ENCODE measurements at regions of chr12 and their contacts with region 1.

Region 1: GRCh38 chr12:89352492-89353187 is at the start of gene DUSP6:
- DNase-seq: peak; percentile 99
- ATAC-seq: peak; percentile 75
- H3K4me3 ChIP-seq: peak within 1 kb of the TSS; percentile 90 to 94
- H3K27ac ChIP-seq: peak within 1 kb of the TSS; percentile 99
- H3K4me1 ChIP-seq: peaks cover 44 to 57% of the 10 kb centered on the region in 2 experiments
- H3K27me3 ChIP-seq: no peaks in the 10 kb centered on the region
- CTCF ChIP-seq: no peak
- POLR2A ChIP-seq: no peak
- RAD21 ChIP-seq: no peak
- total RNA-seq, gene DUSP6: 219 TPM

Region 2: DNA sequence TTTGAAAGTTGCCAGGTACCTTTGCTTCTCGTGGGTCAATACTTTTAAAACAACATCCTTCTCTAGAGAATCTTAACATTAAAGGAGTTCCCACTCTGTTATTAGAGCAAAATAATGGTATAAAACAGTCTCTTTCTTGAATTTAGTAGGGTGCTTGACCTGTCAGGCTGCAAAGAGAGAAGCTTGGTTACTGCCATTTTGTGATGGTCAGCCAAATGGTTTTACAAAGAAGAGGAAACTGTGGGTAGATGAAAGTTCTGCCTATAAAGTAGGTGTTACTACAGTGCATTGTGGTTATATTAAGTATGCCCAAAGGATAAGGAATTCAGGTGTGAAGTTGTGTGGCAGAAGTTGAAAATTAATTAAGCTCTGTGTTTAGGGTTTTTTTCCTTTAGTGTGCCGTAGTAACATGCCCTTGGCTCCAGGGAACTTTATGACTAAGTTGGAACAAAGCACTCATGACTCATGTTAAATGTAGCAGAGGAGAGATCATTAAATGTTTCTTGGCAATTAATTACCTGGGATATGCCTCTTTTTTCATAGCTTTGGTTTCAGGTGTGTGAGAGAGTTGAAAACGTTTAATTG is 418.4 kb before region 1 on chr12:
- CTCF ChIA-PET with region 1: no interaction called
- POLR2A ChIA-PET with region 1: interaction called, 3 read pairs
- RAD21 ChIA-PET with region 1: no interaction called
- intact Hi-C with region 1: loop called (anchors 5 kb)
- DNase-seq: peak; percentile 98
- ATAC-seq: peak; percentile 73
- H3K4me3 ChIP-seq: no peak overlapping the region
- H3K27ac ChIP-seq: peak overlapping the region; percentile 98
- H3K4me1 ChIP-seq: peaks cover 78 to 90% of the 10 kb centered on the region in 2 experiments
- H3K27me3 ChIP-seq: no peaks in the 10 kb centered on the region
- CTCF ChIP-seq: no peak
- POLR2A ChIP-seq: no peak
- RAD21 ChIP-seq: peak; percentile 52

Region 3: GRCh38 chr12:89051065-89051677 is 301.5 kb before region 1 on chr12:
- CTCF ChIA-PET with region 1: no interaction called
- POLR2A ChIA-PET with region 1: interaction called, 3 read pairs
- RAD21 ChIA-PET with region 1: no interaction called
- intact Hi-C with region 1: loop called (anchors 1 kb)
- DNase-seq: peak; percentile 70
- ATAC-seq: peak; percentile 85
- H3K4me3 ChIP-seq: no peak overlapping the region
- H3K27ac ChIP-seq: no peak overlapping the region
- H3K4me1 ChIP-seq: no peaks in the 10 kb centered on the region
- H3K27me3 ChIP-seq: no peaks in the 10 kb centered on the region
- CTCF ChIP-seq: peak; percentile 86 to 95 (median 92)
- POLR2A ChIP-seq: no peak
- RAD21 ChIP-seq: peak; percentile 97

Region 4: DNA sequence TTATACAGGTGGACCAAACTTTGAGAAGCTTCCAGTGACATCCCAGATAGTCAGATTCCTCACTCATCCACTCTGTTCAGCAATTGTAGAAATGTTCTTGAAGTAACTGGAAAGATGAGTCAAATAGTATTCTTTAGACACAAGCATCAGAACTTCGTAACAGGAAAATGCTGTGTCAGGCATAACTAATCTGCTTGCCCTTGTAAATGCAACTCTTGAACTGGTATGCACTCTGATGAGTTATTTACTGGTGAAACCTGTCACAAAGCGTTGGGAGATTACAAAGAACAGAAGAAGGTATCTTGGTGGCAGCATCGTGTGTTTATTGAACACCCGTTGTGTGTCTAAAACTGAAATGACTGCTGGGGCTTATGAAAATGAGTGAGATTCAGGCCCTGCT is 10.4 kb after region 1 on chr12:
- CTCF ChIA-PET with region 1: interaction called, 4 read pairs
- POLR2A ChIA-PET with region 1: interaction called, 17 read pairs
- RAD21 ChIA-PET with region 1: no interaction called
- intact Hi-C with region 1: no loop called
- DNase-seq: no peak
- ATAC-seq: no peak
- H3K4me3 ChIP-seq: no peak overlapping the region
- H3K27ac ChIP-seq: no peak overlapping the region
- H3K4me1 ChIP-seq: no peaks in the 10 kb centered on the region; a peak in 1 of 4 replicates
- H3K27me3 ChIP-seq: no peaks in the 10 kb centered on the region
- CTCF ChIP-seq: no peak
- POLR2A ChIP-seq: no peak
- RAD21 ChIP-seq: no peak

Region 5: DNA sequence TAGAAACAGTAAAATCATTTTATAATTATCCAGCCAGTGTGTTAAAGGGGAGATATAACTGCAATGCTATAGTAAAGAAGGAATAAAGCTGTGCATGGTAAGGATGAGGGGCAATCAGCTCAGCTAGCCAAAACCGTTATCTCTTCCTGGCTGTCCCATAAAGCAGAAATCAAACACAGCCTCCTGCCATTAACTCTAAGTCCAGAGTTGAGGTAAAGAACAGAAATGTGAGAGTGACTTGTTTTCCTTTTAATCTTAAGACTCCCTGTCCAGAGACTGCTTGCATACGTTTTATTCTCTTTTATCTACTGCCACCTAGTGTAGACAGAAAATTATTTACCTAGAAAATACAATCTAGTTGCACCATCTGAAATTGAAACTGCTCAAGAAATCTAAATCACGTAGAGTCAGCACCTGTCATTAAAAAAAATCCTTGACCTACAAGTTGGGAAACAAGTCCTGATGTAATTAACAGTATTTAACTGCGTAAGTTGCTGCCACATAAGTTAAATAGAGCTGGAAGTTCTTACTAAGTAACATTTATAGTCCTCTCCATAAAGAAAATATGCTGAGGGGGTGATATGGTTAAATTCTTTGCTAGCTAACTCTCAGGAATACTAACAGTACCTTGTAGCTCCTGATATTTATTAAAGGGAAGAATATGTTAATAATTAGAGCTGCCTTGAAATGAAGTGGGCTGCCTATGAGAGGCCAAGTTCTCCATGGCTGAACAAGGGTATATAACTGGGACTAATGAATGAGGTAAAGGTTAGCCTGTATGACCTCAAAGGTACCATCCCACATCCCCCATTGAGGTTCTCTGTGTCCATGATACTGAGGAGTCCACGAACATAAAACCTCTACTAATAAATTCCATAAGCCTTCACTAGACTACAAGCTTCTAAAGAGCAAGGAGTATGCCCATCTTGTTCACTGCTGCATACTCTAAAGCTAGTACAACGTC is 109.3 kb after region 1 on chr12:
- CTCF ChIA-PET with region 1: interaction called, 4 read pairs
- POLR2A ChIA-PET with region 1: interaction called, 12 read pairs
- RAD21 ChIA-PET with region 1: interaction called in 1 of 2 experiments, 3 read pairs
- intact Hi-C with region 1: loop called (anchors 1 kb)
- DNase-seq: peak; percentile 57
- ATAC-seq: peak; percentile 87
- H3K4me3 ChIP-seq: no peak overlapping the region
- H3K27ac ChIP-seq: no peak overlapping the region
- H3K4me1 ChIP-seq: peaks cover 0 to 3% of the 10 kb centered on the region in 2 experiments; a peak in 1 of 4 replicates
- H3K27me3 ChIP-seq: no peaks in the 10 kb centered on the region
- CTCF ChIP-seq: peak; percentile 25 to 77 (median 66); a peak in 5 of 6 replicates
- POLR2A ChIP-seq: no peak
- RAD21 ChIP-seq: peak; percentile 91

Measured in HCT116 (cell line).